IMR-90 (cell line): ENCODE measurements at regions of chr7 and their contacts with region 1.

Region 1: GRCh38 chr7:91291905-91292304 is 27.7 kb downstream of the FZD1 start:
- DNase-seq: no peak
- ATAC-seq: no peak
- H3K4me3 ChIP-seq: no peak overlapping the region
- H3K27ac ChIP-seq: no peak overlapping the region
- H3K4me1 ChIP-seq: no peaks in the 10 kb centered on the region
- H3K27me3 ChIP-seq: peaks cover 17% of the 10 kb centered on the region
- CTCF ChIP-seq: no peak
- POLR2A ChIP-seq: no peak
- RAD21 ChIP-seq: no peak

Region 2: GRCh38 chr7:91126762-91127161 is 165.1 kb before region 1 on chr7:
- CTCF ChIA-PET with region 1: no interaction called
- POLR2A ChIA-PET with region 1: no interaction called
- dilution Hi-C with region 1: no loop called
- in situ Hi-C with region 1: no loop called
- intact Hi-C with region 1: no loop called
- DNase-seq: no peak
- ATAC-seq: no peak
- H3K4me3 ChIP-seq: no peak overlapping the region
- H3K27ac ChIP-seq: no peak overlapping the region
- H3K4me1 ChIP-seq: peaks cover 6% of the 10 kb centered on the region
- H3K27me3 ChIP-seq: no peaks in the 10 kb centered on the region
- CTCF ChIP-seq: no peak
- POLR2A ChIP-seq: no peak
- RAD21 ChIP-seq: no peak

Region 3: DNA sequence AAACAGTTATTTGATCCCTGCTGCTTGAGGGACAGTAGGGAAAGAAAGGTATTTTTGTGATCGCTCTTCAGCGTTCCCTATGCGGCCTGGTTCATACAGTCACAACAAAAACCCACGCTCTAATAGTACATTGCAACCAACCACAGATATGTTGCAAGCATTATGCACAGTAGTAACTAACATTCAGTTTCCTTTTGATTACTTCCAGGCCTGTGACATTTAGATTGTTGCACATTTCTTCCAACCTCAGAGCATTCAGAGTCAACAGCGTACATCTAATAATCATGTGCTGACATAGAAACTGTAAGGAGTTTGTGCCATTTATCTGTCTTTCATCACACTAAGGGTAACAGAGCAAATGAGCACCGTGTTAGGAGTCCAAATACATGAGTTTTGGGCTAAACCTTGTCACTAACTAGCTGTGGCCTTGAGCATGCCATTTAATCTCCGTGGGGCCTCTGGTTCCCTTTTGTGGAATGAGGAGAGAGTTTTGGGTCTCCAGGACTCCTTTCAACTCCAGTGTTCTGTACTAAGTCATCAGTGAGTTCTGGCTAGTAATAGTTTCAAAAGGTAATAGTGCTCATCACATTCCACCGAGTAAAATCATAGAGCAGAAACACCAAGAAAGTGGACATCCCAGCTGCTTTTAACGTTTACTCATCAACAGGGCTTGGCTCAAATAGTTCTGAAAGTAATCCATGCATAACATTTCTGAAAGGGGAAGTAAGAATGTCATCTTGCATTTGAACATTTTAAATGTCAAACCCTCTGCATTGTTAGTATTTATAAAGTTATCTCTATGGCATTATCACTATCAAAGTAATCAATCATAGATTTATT is 126.7 kb before region 1 on chr7:
- CTCF ChIA-PET with region 1: no interaction called
- POLR2A ChIA-PET with region 1: no interaction called
- dilution Hi-C with region 1: no loop called
- in situ Hi-C with region 1: no loop called
- intact Hi-C with region 1: no loop called
- DNase-seq: peak; percentile 88
- ATAC-seq: peak; percentile 86
- H3K4me3 ChIP-seq: no peak overlapping the region
- H3K27ac ChIP-seq: peak overlapping the region; percentile 79
- H3K4me1 ChIP-seq: peaks cover 14% of the 10 kb centered on the region
- H3K27me3 ChIP-seq: no peaks in the 10 kb centered on the region
- CTCF ChIP-seq: no peak
- POLR2A ChIP-seq: no peak
- RAD21 ChIP-seq: no peak

Region 4: GRCh38 chr7:91239171-91239604 is 52.7 kb before region 1 on chr7:
- CTCF ChIA-PET with region 1: no interaction called
- POLR2A ChIA-PET with region 1: interaction called, 15 read pairs
- dilution Hi-C with region 1: no loop called
- in situ Hi-C with region 1: no loop called
- intact Hi-C with region 1: no loop called
- DNase-seq: peak; percentile 84
- ATAC-seq: peak; percentile 55
- H3K4me3 ChIP-seq: no peak overlapping the region
- H3K27ac ChIP-seq: no peak overlapping the region
- H3K4me1 ChIP-seq: peaks cover 16% of the 10 kb centered on the region
- H3K27me3 ChIP-seq: no peaks in the 10 kb centered on the region
- CTCF ChIP-seq: no peak
- POLR2A ChIP-seq: no peak
- RAD21 ChIP-seq: no peak

Region 5: GRCh38 chr7:91660734-91661355 is 368.9 kb after region 1 on chr7:
- CTCF ChIA-PET with region 1: no interaction called
- POLR2A ChIA-PET with region 1: no interaction called
- dilution Hi-C with region 1: no loop called
- in situ Hi-C with region 1: no loop called
- intact Hi-C with region 1: loop called (anchors 5 kb)
- DNase-seq: no peak
- ATAC-seq: no peak
- H3K4me3 ChIP-seq: no peak overlapping the region
- H3K27ac ChIP-seq: no peak overlapping the region
- H3K4me1 ChIP-seq: no peaks in the 10 kb centered on the region
- H3K27me3 ChIP-seq: no peaks in the 10 kb centered on the region
- CTCF ChIP-seq: no peak
- POLR2A ChIP-seq: no peak
- RAD21 ChIP-seq: no peak